ENCODE measurements at regions of chr18 and their contacts with region 1.

Region 1: GRCh38 chr18:57561728-57562423 is 24.6 kb downstream of the FECH start:
- DNase-seq: peak in 1 of 2 donors; percentile 72
- ATAC-seq: peak; percentile 63 to 65 (median 64)
- H3K4me3 ChIP-seq: no peak overlapping the region
- H3K4me3 Mint-ChIP-seq: no peak overlapping the region
- H3K27ac ChIP-seq: no peak overlapping the region
- H3K27ac Mint-ChIP-seq: no peak overlapping the region
- H3K4me1 ChIP-seq: no peaks in the 10 kb centered on the region
- H3K4me1 Mint-ChIP-seq: peaks cover 6% of the 10 kb centered on the region in 2 donors
- H3K27me3 ChIP-seq: no peaks in the 10 kb centered on the region
- H3K27me3 Mint-ChIP-seq: no peaks in the 10 kb centered on the region
- CTCF ChIP-seq: peak; percentile 96

Region 2: GRCh38 chr18:56702946-56703345 is 858.9 kb before region 1 on chr18:
- intact Hi-C with region 1: loop called (anchors 5 kb)
- DNase-seq: peak in 1 of 2 donors; percentile 56
- ATAC-seq: peak in 1 of 3 donors; percentile 70
- H3K4me3 ChIP-seq: no peak overlapping the region
- H3K4me3 Mint-ChIP-seq: no peak overlapping the region
- H3K27ac ChIP-seq: no peak overlapping the region
- H3K27ac Mint-ChIP-seq: no peak overlapping the region
- H3K4me1 ChIP-seq: no peaks in the 10 kb centered on the region
- H3K4me1 Mint-ChIP-seq: no peaks in the 10 kb centered on the region
- H3K27me3 ChIP-seq: no peaks in the 10 kb centered on the region
- H3K27me3 Mint-ChIP-seq: no peaks in the 10 kb centered on the region
- CTCF ChIP-seq: peak; percentile 46

Region 3: GRCh38 chr18:56748698-56749268 is 813.1 kb before region 1 on chr18:
- intact Hi-C with region 1: loop called (anchors 1 kb)
- DNase-seq: peak in 1 of 2 donors; percentile 56
- ATAC-seq: no peak
- H3K4me3 ChIP-seq: no peak overlapping the region
- H3K4me3 Mint-ChIP-seq: no peak overlapping the region
- H3K27ac ChIP-seq: no peak overlapping the region
- H3K27ac Mint-ChIP-seq: no peak overlapping the region
- H3K4me1 ChIP-seq: peaks cover 3% of the 10 kb centered on the region
- H3K4me1 Mint-ChIP-seq: peaks cover 18 to 19% of the 10 kb centered on the region in 2 donors
- H3K27me3 ChIP-seq: no peaks in the 10 kb centered on the region
- H3K27me3 Mint-ChIP-seq: no peaks in the 10 kb centered on the region
- CTCF ChIP-seq: peak; percentile 64

Region 4: GRCh38 chr18:56869189-56869777 is 692.6 kb before region 1 on chr18:
- intact Hi-C with region 1: loop called (anchors 2 kb)
- DNase-seq: peak in 1 of 2 donors; percentile 45
- ATAC-seq: peak; percentile 67 to 76 (median 69)
- H3K4me3 ChIP-seq: no peak overlapping the region
- H3K4me3 Mint-ChIP-seq: no peak overlapping the region
- H3K27ac ChIP-seq: no peak overlapping the region
- H3K27ac Mint-ChIP-seq: peak overlapping the region in 1 of 2 donors; percentile 67
- H3K4me1 ChIP-seq: no peaks in the 10 kb centered on the region
- H3K4me1 Mint-ChIP-seq: peaks cover 6 to 15% of the 10 kb centered on the region in 2 donors
- H3K27me3 ChIP-seq: no peaks in the 10 kb centered on the region
- H3K27me3 Mint-ChIP-seq: no peaks in the 10 kb centered on the region
- CTCF ChIP-seq: peak; percentile 80

Region 5: GRCh38 chr18:57533006-57533867 is 28.6 kb before region 1 on chr18:
- intact Hi-C with region 1: no loop called
- DNase-seq: no peak
- ATAC-seq: no peak
- H3K4me3 ChIP-seq: no peak overlapping the region
- H3K4me3 Mint-ChIP-seq: no peak overlapping the region
- H3K27ac ChIP-seq: no peak overlapping the region
- H3K27ac Mint-ChIP-seq: no peak overlapping the region
- H3K4me1 ChIP-seq: no peaks in the 10 kb centered on the region
- H3K4me1 Mint-ChIP-seq: no peaks in the 10 kb centered on the region
- H3K27me3 ChIP-seq: no peaks in the 10 kb centered on the region
- H3K27me3 Mint-ChIP-seq: peaks cover 0 to 15% of the 10 kb centered on the region in 2 donors
- CTCF ChIP-seq: no peak